Colonic mucosa (tissue), 4 donors: ENCODE measurements at regions of chr19 and their contacts with region 1.

Region 1: GRCh38 chr19:8352134-8352827 is 9.2 kb upstream of the KANK3 start:
- DNase-seq: no peak
- H3K4me3 ChIP-seq: no peak overlapping the region
- H3K27ac ChIP-seq: no peak overlapping the region
- H3K4me1 ChIP-seq: no peaks in the 10 kb centered on the region
- H3K27me3 ChIP-seq: no peaks in the 10 kb centered on the region
- CTCF ChIP-seq: no peak

Region 2: DNA sequence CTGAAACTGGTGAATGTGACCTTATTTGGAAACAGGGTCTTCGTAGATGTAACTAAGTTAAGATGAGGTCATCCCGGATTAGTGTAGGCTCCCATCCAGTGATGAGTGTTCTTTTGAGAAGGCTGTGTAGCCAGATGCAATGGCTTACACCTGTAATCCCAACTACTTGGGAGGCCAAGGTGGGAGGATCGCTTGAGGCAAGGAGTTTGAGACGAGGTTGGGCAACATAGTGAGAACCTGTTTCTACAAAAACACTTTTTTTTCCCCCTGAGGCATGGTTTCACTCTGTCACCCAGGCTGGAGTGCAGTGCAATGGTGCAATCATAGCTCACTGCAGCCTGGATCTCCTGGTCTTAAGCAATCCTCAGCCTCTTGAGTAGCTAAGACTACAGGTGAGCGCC is 239.3 kb before region 1 on chr19:
- intact Hi-C with region 1: no loop called
- DNase-seq: no peak
- H3K4me3 ChIP-seq: no peak overlapping the region
- H3K27ac ChIP-seq: no peak overlapping the region
- H3K4me1 ChIP-seq: no peaks in the 10 kb centered on the region
- H3K27me3 ChIP-seq: no peaks in the 10 kb centered on the region
- CTCF ChIP-seq: no peak

Region 3: DNA sequence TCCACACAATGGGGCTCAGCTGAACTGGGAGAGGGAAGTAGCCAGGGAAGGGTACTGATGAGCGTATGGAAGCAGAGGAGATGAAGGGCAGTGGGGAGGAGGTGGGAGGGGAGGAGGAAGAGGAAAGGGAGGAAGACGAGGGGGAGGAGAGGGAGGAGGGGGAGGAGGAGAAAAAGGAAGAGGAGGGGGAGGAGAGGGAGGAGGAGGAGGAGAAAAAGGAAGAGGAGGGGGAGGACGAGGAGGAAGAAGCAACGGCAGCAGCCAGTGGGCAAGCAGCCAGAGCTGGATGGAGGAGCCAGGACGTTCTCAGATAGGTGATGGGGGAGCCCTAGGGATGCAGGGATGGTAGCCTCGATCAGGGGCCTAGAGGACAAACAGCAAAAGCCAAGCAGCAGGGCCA is 137.5 kb before region 1 on chr19:
- intact Hi-C with region 1: no loop called
- DNase-seq: no peak
- H3K4me3 ChIP-seq: no peak overlapping the region
- H3K27ac ChIP-seq: no peak overlapping the region
- H3K4me1 ChIP-seq: no peaks in the 10 kb centered on the region
- H3K27me3 ChIP-seq: no peaks in the 10 kb centered on the region
- CTCF ChIP-seq: no peak

Region 4: DNA sequence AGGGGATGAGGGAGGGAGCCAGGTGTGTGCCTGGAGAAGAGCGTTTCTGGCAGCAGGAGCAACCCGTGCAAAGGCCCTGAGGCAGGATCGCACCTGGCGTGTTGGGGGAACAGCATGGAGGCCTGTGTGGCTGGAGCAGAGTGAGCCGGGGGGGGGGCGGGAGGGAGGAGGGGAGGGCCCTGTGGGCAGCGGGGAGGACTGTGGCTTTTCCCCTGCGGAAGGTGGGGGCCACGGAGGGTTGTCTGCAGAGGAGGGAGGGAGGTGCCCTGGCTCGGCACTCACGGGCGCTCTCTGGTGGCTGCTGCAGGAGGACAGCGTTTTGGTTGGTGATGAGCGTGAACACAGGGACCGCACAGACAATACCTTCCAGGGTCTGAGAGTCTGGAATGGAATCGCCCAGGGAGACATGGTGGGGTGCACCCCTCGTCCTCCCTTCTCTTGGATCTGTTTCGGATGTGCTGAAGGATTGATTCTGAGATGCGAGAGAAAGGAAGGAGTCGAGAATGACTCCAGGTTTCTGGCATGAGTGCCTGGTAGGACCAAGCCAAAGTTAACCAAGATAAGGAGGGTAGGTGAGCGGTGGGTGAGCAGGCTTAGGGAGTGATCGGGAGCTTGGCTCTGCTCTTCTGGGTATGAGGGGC is 44.4 kb after region 1 on chr19:
- intact Hi-C with region 1: loop called (anchors 5 kb)
- DNase-seq: peak; percentile 62
- H3K4me3 ChIP-seq: no peak overlapping the region
- H3K27ac ChIP-seq: no peak overlapping the region
- H3K4me1 ChIP-seq: peaks cover 5% of the 10 kb centered on the region
- H3K27me3 ChIP-seq: no peaks in the 10 kb centered on the region
- CTCF ChIP-seq: no peak

Region 5: GRCh38 chr19:8505680-8506401 is 153.6 kb after region 1 on chr19:
- intact Hi-C with region 1: loop called (anchors 5 kb)
- DNase-seq: peak; percentile 85
- H3K4me3 ChIP-seq: peak overlapping the region; percentile 58
- H3K27ac ChIP-seq: no peak overlapping the region
- H3K4me1 ChIP-seq: no peaks in the 10 kb centered on the region
- H3K27me3 ChIP-seq: no peaks in the 10 kb centered on the region
- CTCF ChIP-seq: peak; percentile 70

Region 6: DNA sequence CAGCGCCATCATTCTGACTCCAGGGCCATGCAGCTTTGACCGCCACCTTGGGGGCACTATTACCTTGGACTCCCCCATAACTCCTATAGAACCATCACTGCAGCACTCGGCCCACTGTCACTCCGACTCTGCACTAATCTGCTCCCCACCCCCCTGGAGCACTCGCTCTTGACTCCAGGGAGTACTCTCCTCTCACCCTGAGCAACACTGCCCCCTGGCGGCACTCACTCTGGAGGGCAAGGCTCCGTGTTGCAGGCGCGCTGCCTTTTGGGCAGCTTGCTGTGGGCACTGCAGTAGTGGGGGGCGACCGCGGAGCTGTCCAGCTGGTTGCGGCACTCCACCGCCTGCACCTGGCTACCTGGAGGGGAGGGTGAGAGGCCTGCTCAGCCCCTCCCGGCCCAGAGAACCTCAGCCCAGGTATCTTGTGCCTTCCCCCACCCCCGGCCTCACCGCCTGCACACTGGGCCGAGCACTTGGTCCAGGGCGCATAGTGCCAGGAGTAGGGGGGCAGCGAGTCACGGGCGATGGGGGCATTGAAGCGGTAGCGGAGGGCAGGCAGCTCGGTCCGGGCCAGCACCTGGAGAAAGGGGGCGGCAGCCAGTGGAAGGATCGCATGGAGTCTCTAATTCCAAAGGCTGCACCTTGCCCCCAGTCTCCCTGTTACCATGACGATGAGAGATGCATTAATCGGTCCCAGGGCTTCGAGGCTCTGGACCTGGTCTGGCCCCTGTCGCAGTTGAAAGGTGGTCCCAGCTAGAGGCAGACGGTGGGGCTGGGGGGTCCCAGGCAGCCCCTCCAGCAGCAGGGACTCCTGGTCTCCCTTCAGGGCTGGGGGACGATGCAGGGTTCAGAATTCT is 233.8 kb after region 1 on chr19:
- intact Hi-C with region 1: loop called (anchors 5 kb)
- DNase-seq: peak; percentile 66
- H3K4me3 ChIP-seq: no peak overlapping the region
- H3K27ac ChIP-seq: no peak overlapping the region
- H3K4me1 ChIP-seq: no peaks in the 10 kb centered on the region
- H3K27me3 ChIP-seq: no peaks in the 10 kb centered on the region
- CTCF ChIP-seq: peak; percentile 70